CD14-positive monocyte (primary cell): ENCODE measurements at regions of chr2 and their contacts with region 1.

Region 1: GRCh38 chr2:33599175-33599942 is at the start of gene FAM98A:
- DNase-seq: peak; percentile 99
- H3K4me3 ChIP-seq: peak within 1 kb of the TSS; percentile 90 to 93 (median 92)
- H3K4me3 Mint-ChIP-seq: peak within 1 kb of the TSS; percentile 97 to 100
- H3K27ac ChIP-seq: peak within 1 kb of the TSS; percentile 67 to 88
- H3K27ac Mint-ChIP-seq: peak within 1 kb of the TSS; percentile 88 to 95 (median 92)
- H3K4me1 ChIP-seq: peaks cover 14 to 26% of the 10 kb centered on the region in 2 donors
- H3K4me1 Mint-ChIP-seq: peaks cover 20% of the 10 kb centered on the region
- H3K27me3 ChIP-seq: no peaks in the 10 kb centered on the region
- H3K27me3 Mint-ChIP-seq: peaks cover 0 to 7% (median 2%) of the 10 kb centered on the region in 3 donors
- CTCF ChIP-seq: no peak
- polyA plus RNA-seq, gene FAM98A: 1.9 to 9.6 (median 7.1) TPM

Region 2: GRCh38 chr2:32010670-32011484 is 1588.5 kb before region 1 on chr2 and contains the start of gene MEMO1:
- intact Hi-C with region 1: loop called in 1 of 2 experiments (anchors 5 kb)
- DNase-seq: peak; percentile 90 to 96 (median 94)
- H3K4me3 ChIP-seq: peak within 1 kb of the TSS; percentile 74 to 88 (median 82)
- H3K4me3 Mint-ChIP-seq: peak within 1 kb of the TSS; percentile 95 to 98
- H3K27ac ChIP-seq: peak within 1 kb of the TSS; percentile 83 to 97
- H3K27ac Mint-ChIP-seq: peak within 1 kb of the TSS; percentile 89 to 96 (median 95)
- H3K4me1 ChIP-seq: peaks cover 42 to 50% of the 10 kb centered on the region in 2 donors
- H3K4me1 Mint-ChIP-seq: peaks cover 49% of the 10 kb centered on the region
- H3K27me3 ChIP-seq: no peaks in the 10 kb centered on the region
- H3K27me3 Mint-ChIP-seq: peaks cover 0 to 2% (median 0%) of the 10 kb centered on the region in 3 donors
- CTCF ChIP-seq: no peak
- polyA plus RNA-seq, gene MEMO1: 49.5 to 63.7 (median 57.0) TPM

Region 3: GRCh38 chr2:32627814-32628579 is 971.4 kb before region 1 on chr2 and contains the start of gene TTC27:
- intact Hi-C with region 1: loop called in 1 of 2 experiments (anchors 5 kb)
- DNase-seq: peak; percentile 90 to 93 (median 92)
- H3K4me3 ChIP-seq: peak within 1 kb of the TSS; percentile 71 to 93 (median 79)
- H3K4me3 Mint-ChIP-seq: peak within 1 kb of the TSS; percentile 91 to 98
- H3K27ac ChIP-seq: peak within 1 kb of the TSS in 1 of 2 donors; percentile 76
- H3K27ac Mint-ChIP-seq: peak within 1 kb of the TSS; percentile 79 to 93 (median 86)
- H3K4me1 ChIP-seq: peaks cover 10 to 19% of the 10 kb centered on the region in 2 donors
- H3K4me1 Mint-ChIP-seq: peaks cover 18% of the 10 kb centered on the region
- H3K27me3 ChIP-seq: no peaks in the 10 kb centered on the region
- H3K27me3 Mint-ChIP-seq: peaks cover 5 to 8% (median 6%) of the 10 kb centered on the region in 3 donors
- CTCF ChIP-seq: no peak
- polyA plus RNA-seq, gene TTC27: 4.0 to 4.8 (median 4.4) TPM

Region 4: DNA sequence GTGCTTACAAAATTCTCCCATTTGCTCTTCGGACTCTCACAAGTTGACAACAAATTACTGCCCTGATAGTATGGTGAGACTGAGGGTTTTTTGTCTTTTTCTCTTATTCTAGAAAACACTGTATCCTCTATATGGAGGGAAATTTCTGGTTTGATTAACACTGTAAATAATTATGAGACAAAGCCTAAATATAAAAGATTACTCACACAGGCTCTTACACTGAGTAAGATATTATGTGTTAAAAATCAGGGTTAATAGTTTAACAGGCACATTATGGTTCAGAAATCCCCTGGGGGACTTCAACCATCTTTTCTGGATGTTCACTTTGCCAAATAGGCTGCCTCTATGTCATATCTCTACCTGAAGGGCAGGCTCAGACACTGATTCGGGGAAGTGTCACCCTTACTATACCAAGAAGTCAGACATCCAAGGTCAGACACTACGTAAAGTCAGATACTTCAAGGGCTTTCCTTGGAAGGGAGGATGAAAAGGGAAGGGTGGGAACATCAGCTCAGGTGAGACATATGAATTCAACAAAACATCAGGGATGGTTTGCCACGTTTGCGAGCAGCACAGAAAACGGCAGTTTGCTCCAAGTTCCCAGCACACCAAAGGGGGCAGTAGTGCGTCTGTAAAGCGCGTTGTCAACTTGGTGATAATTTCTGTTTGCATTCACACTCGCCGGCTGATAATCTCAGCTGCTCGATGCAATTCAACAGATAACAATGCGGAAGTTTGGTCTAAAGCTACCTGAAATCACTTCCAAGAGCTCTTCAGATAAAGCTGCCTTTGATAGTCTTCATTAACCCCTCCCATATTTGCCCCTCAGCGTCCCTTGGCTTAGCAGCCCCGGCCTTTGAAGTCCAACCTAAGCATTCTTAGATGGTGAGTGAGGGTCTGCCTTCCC is 123.9 kb before region 1 on chr2:
- intact Hi-C with region 1: loop called in 1 of 2 experiments (anchors 5 kb)
- DNase-seq: peak; percentile 63 to 75 (median 75)
- H3K4me3 ChIP-seq: peak overlapping the region; percentile 83 to 99 (median 92)
- H3K4me3 Mint-ChIP-seq: peak overlapping the region; percentile 97 to 99
- H3K27ac ChIP-seq: peak overlapping the region; percentile 71 to 91
- H3K27ac Mint-ChIP-seq: peak overlapping the region; percentile 92 to 96 (median 95)
- H3K4me1 ChIP-seq: peaks cover 21 to 25% of the 10 kb centered on the region in 2 donors
- H3K4me1 Mint-ChIP-seq: peaks cover 39% of the 10 kb centered on the region
- H3K27me3 ChIP-seq: no peaks in the 10 kb centered on the region
- H3K27me3 Mint-ChIP-seq: peaks cover 0 to 3% (median 0%) of the 10 kb centered on the region in 3 donors
- CTCF ChIP-seq: peak; percentile 90

Region 5: DNA sequence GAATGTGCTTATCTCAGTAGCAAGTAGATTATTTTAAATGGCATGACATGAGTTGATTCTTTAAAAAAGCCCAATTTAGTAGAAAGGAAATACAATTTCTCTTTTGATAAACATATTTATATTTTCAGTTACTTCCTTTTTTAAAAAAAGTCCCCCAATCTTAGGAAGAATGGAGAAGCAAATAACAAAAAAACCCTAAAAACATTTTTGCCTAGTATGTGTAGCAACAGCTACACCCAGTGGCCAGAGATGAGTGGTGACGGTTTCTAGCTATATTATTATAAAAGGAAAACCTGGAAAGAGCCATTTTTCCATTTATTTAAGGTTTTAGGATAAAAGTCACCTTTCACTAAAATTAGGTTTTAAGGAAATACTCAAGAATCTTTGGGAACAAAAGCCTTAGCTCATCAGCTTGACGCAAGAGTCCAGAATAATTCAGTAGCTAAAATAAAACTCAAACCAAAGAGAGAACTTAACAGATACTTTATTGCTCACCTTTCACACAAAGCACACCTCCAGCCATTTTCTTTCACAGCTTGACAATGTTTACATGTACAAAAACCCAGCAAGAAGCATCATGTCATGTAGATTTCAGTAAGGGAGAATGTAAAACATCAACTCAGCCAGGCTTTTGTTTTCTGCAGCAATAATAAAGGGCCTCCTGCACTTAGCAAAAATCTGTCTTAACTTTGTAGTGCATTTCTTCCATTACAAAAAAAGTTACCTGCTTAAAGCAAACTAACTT is 16.0 kb before region 1 on chr2:
- intact Hi-C with region 1: no loop called
- DNase-seq: peak; percentile 29 to 58 (median 56)
- H3K4me3 ChIP-seq: no peak overlapping the region
- H3K4me3 Mint-ChIP-seq: no peak overlapping the region
- H3K27ac ChIP-seq: no peak overlapping the region
- H3K27ac Mint-ChIP-seq: no peak overlapping the region
- H3K4me1 ChIP-seq: no peaks in the 10 kb centered on the region
- H3K4me1 Mint-ChIP-seq: peaks cover 7% of the 10 kb centered on the region
- H3K27me3 ChIP-seq: no peaks in the 10 kb centered on the region
- H3K27me3 Mint-ChIP-seq: no peaks in the 10 kb centered on the region
- CTCF ChIP-seq: peak; percentile 93